Heart right ventricle (tissue), 16 donors: ENCODE measurements at regions of chr15 and their contacts with region 1.

Region 1: DNA sequence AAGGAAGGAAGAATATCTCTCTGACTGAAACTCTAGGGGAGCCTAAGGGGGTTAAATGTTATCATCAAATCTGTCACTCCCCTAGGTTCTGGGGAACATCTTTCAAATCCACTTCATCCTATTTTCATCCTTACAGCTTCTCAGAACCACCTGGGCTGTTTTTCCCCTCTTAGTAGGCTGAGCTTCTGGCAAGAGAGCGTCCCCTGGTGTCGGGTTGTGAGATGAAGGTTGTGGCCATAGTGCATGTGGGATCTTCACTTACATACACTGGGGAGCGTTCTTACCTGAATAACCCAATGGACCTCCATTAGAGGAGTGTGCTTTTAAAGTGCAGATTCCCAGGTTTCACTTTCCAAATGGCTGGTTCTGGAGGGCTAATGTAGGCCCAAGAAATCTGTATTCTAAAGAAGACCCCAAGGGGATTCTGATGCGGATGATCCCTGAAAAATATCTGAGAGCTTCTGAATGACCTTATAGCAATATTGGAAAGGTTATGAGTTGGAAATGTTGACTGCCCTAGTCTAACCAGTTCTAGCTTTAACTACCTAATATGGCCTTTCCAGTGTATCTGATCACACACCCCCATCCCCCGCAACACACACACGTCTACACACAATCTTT is 663.7 kb downstream of the AGBL1 start:
- DNase-seq: peak; percentile 6 to 15
- ATAC-seq: no peak
- H3K4me3 ChIP-seq: no peak overlapping the region
- H3K27ac ChIP-seq: no peak overlapping the region
- H3K4me1 ChIP-seq: no peaks in the 10 kb centered on the region
- H3K27me3 ChIP-seq: no peaks in the 10 kb centered on the region
- CTCF ChIP-seq: peak in 8 of 9 donors; percentile 17 to 60 (median 52)

Region 2: GRCh38 chr15:85865070-85865684 is 878.2 kb before region 1 on chr15:
- intact Hi-C with region 1: loop called in 1 of 10 experiments (anchors 5 kb)
- DNase-seq: peak; percentile 22 to 24
- ATAC-seq: peak in 4 of 8 donors; percentile 33 to 67 (median 59)
- H3K4me3 ChIP-seq: no peak overlapping the region
- H3K27ac ChIP-seq: no peak overlapping the region
- H3K4me1 ChIP-seq: no peaks in the 10 kb centered on the region
- H3K27me3 ChIP-seq: peaks cover 0 to 26% (median 8%) of the 10 kb centered on the region in 7 donors
- CTCF ChIP-seq: peak; percentile 18 to 69 (median 58)

Region 3: DNA sequence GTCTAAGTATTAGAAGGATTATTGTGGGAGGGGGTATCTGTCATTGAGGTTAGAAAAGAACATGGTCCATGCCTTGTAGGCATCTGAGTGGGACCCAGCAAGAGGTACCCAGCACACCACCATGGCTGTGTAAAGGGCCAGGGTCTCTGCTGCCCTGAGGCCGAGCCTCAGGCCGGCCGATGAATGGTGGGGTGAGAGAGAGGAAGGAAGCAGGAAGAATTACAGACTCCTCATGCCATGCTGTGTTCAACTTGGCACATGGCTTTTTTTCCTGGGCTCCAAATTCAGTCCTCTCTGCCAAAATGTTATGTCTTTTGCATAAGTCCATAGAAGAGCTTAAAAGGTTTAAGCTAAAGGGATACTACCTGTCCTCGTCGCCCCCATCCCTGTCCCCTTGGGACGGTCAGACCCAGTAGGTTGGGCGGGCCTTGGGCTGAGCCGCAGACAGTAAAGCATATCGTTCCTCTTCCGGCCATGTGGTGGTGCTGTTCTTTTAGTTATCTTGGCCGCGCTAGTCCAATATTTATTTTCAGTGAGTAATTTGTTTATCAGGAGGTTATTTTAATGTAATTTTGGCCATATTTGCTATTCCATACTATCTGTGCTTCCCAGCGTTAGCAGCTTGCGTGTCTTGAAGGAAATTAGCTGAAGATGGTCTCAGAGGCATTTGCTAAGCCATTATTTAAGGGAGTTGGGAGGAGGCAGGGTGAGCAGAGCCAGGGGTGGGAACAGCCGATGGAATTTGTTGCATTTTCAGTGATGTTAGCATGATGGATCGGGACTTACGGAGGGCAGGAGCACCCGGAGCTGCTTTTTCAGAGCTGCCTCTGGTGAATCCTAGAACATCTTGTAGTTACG is 511.3 kb before region 1 on chr15:
- intact Hi-C with region 1: loop called in 2 of 10 experiments (anchors 10 kb)
- DNase-seq: peak in 1 of 2 donors; percentile 6
- ATAC-seq: peak in 4 of 8 donors; percentile 41 to 70 (median 57)
- H3K4me3 ChIP-seq: peak overlapping the region in 2 of 10 donors; percentile 16 to 23
- H3K27ac ChIP-seq: no peak overlapping the region
- H3K4me1 ChIP-seq: peaks cover 0 to 6% (median 0%) of the 10 kb centered on the region in 9 donors
- H3K27me3 ChIP-seq: peaks cover 0 to 69% (median 40%) of the 10 kb centered on the region in 7 donors
- CTCF ChIP-seq: peak in 8 of 9 donors; percentile 37 to 69 (median 62)

Region 4: GRCh38 chr15:86502301-86502700 is 241.1 kb before region 1 on chr15:
- intact Hi-C with region 1: no loop called
- DNase-seq: no peak
- ATAC-seq: no peak
- H3K4me3 ChIP-seq: no peak overlapping the region
- H3K27ac ChIP-seq: no peak overlapping the region
- H3K4me1 ChIP-seq: no peaks in the 10 kb centered on the region
- H3K27me3 ChIP-seq: no peaks in the 10 kb centered on the region
- CTCF ChIP-seq: no peak

Region 5: GRCh38 chr15:86677278-86677677 is 66.1 kb before region 1 on chr15:
- intact Hi-C with region 1: no loop called
- DNase-seq: no peak
- ATAC-seq: no peak
- H3K4me3 ChIP-seq: no peak overlapping the region
- H3K27ac ChIP-seq: no peak overlapping the region
- H3K4me1 ChIP-seq: no peaks in the 10 kb centered on the region
- H3K27me3 ChIP-seq: no peaks in the 10 kb centered on the region
- CTCF ChIP-seq: no peak

Region 6: GRCh38 chr15:86711476-86711875 is 31.9 kb before region 1 on chr15:
- intact Hi-C with region 1: no loop called
- DNase-seq: no peak
- ATAC-seq: no peak
- H3K4me3 ChIP-seq: no peak overlapping the region
- H3K27ac ChIP-seq: no peak overlapping the region
- H3K4me1 ChIP-seq: no peaks in the 10 kb centered on the region
- H3K27me3 ChIP-seq: no peaks in the 10 kb centered on the region
- CTCF ChIP-seq: no peak

Region 7: DNA sequence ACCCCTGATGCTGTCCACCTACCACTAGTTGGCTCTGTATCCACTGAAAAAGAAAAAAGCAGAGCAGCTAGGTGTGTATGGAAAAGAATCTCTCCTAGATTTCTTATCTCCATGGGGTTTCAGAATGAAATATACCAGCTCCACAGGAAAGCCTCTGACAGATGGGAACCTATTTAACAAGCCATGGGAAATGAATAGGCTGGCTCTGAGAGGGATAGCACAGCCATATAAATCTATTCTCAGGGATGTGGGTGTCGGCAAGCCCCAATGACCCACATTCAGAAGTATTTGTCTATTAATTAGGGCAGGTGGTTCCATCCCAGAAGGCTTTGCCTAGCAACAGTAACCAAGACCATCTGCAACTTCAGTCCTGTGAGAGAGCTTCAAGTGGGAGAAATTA is 30.3 kb after region 1 on chr15:
- intact Hi-C with region 1: loop called in 1 of 10 experiments (anchors 1 kb)
- DNase-seq: no peak
- ATAC-seq: no peak
- H3K4me3 ChIP-seq: no peak overlapping the region
- H3K27ac ChIP-seq: no peak overlapping the region
- H3K4me1 ChIP-seq: no peaks in the 10 kb centered on the region
- H3K27me3 ChIP-seq: no peaks in the 10 kb centered on the region
- CTCF ChIP-seq: no peak